Posterior cingulate gyrus (tissue), 11 donors: ENCODE measurements at regions of chr20 and their contacts with region 1.

Region 1: DNA sequence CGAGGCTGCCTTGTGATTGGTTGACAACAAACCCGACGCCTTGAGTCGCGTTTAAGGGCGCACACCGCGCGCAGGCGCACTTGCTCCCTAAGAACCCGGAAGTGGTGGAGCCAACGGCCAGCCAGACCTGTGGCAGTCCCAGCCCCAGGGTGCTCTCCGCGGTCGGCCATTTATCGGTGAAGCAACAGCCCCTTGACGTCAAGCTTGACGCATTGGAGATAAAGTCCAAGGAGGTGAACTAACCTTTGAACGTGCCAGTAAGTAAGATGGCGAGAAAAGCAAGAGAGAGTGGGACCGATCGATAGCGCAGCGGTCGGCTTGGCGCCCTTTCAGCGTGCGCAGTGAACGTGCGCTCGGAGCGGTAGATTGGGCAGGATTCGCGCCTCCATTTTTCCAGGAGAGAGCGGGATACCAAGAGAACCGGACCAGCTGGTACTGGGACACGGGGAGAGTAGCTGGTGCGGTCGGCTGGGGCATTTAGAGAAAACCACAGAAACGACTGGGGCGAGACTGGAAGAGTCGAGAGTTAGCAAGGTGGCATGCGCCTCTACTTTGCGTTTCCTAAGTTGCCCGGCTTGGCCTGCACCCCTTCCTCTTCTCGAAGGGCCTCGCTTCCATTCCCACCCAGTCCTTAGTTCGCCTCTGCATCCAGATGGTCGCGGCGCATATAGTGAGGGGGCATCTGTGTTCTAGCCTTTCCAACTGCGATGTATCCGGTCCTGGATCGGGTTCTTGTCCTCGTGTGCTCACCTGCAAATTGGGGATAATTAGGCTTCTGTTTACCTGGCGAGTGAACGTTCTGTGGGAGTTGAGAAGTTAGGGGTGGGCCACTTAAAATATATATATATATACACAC is at the start of gene CSTF1:
- DNase-seq: peak; percentile 97 to 100 (median 99)

Region 2: DNA sequence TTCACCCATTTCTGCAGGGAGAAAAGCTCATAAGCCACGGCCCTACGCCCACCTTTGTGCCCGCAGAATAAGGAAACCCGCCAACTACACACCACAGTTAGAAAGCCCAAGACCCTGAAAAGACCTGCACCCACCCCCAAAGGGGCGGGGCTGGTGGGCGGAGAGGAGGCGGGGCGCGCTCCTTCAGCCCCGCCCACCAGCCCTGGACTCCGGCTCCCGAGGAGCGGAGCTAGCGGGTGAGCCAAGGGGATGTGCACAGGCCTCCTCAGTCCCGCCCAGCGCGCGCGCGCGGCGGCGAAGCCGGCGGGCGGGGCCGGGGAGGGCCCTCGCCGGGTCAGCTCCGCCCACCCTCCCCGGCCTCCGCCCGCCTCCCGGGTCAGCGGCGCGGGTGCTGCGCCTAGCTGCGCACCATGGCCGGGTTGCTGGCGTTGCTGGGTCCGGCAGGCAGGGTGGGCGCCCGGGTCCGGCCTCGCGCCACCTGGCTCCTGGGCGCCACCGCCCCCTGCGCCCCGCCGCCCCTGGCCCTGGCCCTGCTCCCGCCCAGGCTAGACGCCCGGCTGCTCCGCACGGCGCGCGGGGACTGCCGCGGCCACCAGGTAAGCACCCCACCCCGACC is 33.8 kb before region 1 on chr20 and contains the start of gene FAM210B:
- intact Hi-C with region 1: loop called (anchors 5 kb)
- DNase-seq: peak; percentile 71 to 99 (median 89)

Region 3: DNA sequence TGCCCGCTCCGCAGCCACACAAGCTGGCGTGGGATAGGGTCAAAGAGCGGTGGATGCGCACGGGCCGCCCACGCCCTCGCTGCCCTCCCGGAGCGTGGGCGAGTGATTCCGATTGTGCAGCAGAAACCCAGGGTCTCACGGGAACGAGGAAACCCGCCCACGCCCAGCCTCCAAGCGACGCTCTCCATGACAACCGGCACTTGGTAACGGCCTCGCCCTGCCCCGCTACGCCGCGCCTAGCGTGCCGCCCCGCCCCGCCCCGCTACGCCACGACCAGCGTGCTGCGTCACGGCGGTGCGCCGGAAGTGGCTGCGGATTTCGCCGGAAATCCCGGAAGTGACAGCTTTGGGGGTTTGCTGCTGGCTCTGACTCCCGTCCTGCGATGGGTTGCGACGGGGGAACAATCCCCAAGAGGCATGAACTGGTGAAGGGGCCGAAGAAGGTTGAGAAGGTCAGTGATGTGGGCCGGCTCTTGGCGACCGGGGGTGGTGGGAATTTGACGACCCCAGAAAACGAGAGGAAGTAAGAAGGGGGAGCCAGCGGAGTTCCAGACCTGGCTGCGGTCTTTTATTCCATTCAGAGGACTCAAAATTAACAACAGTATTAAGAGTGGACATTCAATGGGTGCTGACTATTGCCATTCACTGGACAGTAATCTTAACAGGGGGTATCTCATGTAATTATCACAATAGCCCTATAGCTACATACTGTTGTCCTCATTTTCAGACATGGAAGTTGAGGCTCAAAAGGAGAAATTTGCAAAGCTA is 76.0 kb after region 1 on chr20 and contains the start of gene RTF2:
- intact Hi-C with region 1: loop called (anchors 2 kb)
- DNase-seq: peak; percentile 89 to 99 (median 94)

Region 4: DNA sequence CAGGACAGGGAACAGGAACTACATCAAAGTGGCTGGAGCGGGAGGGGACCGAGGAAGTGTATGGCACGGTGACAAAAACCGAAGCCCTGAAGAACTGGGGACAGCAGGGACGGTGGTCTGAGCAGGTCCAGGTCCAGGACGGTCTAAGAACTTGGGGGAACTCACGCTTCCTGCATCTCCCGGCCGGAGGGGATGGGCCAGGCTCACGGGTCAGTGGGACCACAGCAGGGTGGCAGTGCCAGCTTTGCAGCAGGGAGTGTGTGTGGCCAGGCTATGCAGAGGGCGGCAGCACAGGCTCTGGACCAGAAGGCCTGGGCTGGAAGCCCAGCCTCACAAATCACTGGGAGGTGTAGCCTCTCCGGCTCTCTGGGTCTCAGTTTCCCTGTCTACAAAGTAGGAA is 750.2 kb after region 1 on chr20:
- intact Hi-C with region 1: no loop called
- DNase-seq: peak in 1 of 10 donors; percentile 78